ENCODE measurements at regions of chr16 and their contacts with region 1.

Region 1: GRCh38 chr16:69796351-69797118 is 34.4 kb downstream of the WWP2 start:
- DNase-seq: peak in 1 of 2 donors; percentile 40
- ATAC-seq: peak; percentile 65 to 89 (median 85)
- H3K4me3 ChIP-seq: peak overlapping the region in 4 of 10 donors; percentile 39 to 50 (median 44)
- H3K27ac ChIP-seq: no peak overlapping the region
- H3K4me1 ChIP-seq: peaks cover 0 to 13% (median 0%) of the 10 kb centered on the region in 9 donors
- H3K27me3 ChIP-seq: no peaks in the 10 kb centered on the region
- CTCF ChIP-seq: peak; percentile 79 to 95 (median 91)

Region 2: DNA sequence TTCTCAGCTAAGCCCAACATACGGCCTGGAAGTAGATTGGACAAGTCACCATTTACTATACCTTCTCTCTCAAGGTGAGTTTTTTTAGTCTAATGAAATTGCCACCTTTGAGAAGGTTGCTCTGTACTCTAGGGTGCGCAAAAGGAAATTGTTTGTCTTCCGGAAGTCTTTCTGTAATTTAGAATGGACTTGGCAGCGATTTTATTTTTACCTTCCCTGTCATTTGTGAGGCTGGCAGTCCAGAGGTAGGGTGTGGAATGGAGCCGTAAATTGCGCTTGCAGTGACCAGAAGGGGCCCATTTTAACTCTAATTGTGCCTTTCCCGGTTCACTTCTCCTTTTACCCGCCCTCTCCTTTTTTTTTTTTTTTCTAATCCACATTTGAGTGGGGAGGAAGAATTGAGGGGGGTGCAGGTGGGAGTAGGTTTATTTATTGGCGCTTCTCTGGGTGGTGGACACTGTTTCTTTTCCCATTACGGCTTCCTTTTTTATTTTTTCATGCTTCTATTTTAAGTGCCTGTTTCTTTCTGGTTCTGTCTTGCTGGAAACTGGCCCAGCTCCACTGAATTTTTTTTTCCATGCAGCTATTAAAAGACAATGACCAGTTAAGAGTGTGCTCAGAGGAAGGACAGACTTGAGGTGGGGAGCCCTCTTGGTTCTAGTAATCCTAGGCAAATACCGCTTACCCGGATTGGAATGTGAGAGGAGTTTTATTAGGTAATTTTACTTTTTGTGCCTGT is 64.9 kb after region 1 on chr16:
- intact Hi-C with region 1: loop called in 8 of 10 experiments (anchors 2 to 10 kb)
- DNase-seq: peak in 1 of 2 donors; percentile 90
- ATAC-seq: peak; percentile 80 to 92 (median 89)
- H3K4me3 ChIP-seq: peak overlapping the region in 5 of 10 donors; percentile 9 to 28 (median 23)
- H3K27ac ChIP-seq: peak overlapping the region; percentile 72 to 95 (median 89)
- H3K4me1 ChIP-seq: peaks cover 17 to 60% (median 38%) of the 10 kb centered on the region in 9 donors
- H3K27me3 ChIP-seq: no peaks in the 10 kb centered on the region
- CTCF ChIP-seq: no peak

Region 3: GRCh38 chr16:69930117-69930776 is 133.7 kb after region 1 on chr16:
- intact Hi-C with region 1: loop called (anchors 1 to 5 kb)
- DNase-seq: peak; percentile 46 to 74
- ATAC-seq: peak; percentile 63 to 80 (median 74)
- H3K4me3 ChIP-seq: no peak overlapping the region
- H3K27ac ChIP-seq: peak overlapping the region in 1 of 10 donors; percentile 25
- H3K4me1 ChIP-seq: peaks cover 10 to 50% (median 32%) of the 10 kb centered on the region in 9 donors
- H3K27me3 ChIP-seq: no peaks in the 10 kb centered on the region
- CTCF ChIP-seq: peak; percentile 62 to 88 (median 75)